Posterior vena cava (tissue), 2 donors: ENCODE measurements at regions of chr9 and their contacts with region 1.

Region 1: DNA sequence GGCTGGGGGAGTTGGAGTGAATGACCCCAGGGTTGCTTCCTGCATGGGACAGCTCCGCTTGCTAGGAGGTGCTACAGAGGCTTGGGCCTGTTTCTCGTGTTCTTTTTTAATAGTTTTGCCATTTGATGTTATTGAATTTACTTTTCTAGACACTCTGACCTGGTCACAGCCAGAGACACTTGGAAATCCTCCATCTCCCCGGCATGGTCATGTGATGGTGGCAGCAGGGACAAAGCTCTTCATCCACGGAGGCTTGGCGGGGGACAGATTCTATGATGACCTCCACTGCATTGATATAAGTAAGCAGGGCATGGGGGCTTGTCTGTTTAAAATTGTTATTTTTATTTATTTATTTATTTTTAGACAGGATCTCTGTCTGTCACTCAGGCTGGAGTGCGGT is 13.4 kb downstream of the HSPA5 start:
- DNase-seq: no peak

Region 2: DNA sequence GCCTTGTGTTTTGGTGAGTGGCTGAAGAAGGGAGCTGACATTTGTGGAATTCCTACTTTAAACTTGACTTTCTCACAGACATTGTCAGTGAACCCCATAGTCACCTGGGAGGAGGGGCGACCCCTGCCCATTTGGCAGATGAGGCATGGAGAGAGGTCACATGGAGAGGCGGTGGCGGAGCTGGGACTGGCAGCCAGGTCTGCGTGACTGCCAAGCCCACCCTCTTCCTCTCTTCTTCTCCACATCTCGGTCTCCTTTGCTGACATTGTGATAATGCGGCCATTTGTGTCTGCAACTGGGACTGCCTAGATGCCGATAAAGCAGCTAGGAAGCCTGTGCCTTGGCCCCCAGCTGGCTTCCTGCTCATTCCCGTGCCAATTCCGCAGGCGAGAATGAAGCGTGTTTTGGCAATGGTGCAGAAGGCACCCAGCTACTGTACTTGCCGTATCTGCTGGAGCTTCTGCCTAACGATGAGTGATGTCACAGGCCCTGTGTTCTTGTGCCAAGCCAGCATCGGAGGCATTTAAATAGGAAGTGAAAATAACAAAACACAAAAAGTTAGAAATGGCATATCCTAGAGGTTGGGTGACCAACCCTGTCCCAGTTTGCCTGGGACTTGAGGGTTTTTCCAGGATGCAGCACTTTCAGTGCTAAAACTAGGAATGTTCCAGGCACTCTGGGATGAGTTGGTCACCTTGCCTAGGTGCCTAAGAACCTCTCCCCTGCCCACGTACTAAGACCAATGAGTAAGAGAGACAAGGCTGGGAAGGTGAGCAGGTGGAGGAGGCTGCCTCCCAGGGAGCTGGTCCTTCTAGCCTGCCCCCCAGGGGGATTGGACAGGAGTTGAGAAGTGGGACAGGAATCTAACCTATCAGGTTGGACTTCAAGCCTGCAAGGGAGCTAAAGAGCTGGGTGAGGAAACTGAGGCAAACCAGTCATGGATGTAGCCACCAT is 427.2 kb before region 1 on chr9:
- intact Hi-C with region 1: no loop called
- DNase-seq: no peak

Region 3: GRCh38 chr9:126490871-126491567 is 1263.3 kb after region 1 on chr9:
- intact Hi-C with region 1: loop called in 1 of 2 experiments (anchors 10 kb)
- DNase-seq: peak; percentile 53